ENCODE measurements at regions of chr1 and their contacts with region 1.

Region 1: DNA sequence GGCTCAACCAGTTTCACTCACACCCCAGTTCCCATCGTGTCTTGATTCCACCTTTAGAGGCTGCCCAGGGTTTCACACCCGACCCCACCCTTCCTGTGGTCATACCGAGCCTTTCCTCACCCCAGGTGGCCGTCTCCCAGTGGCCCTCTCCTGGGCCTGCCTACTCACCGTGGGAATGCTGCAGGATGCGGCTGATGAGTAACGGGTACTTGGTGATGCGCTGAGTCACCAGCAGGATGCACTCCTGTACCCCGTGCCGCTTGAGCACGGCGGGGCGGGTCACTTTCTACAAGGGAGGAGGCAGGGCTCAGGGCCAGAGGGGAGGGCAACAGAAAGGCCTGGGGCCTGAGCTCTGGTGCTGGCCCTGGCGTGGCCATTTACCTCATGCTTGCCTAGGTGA is 16.4 kb downstream of the ARHGEF2 start:
- DNase-seq: peak; percentile 96 to 98
- ATAC-seq: peak; percentile 97 to 99
- H3K4me3 ChIP-seq: peak overlapping the region; percentile 17; the same call in 1 of the 3 replicates
- H3K27ac ChIP-seq: peak overlapping the region; percentile 91 to 95
- H3K4me1 ChIP-seq: peaks cover 39% of the 10 kb centered on the region
- CTCF ChIP-seq: peak; percentile 43
- EP300 ChIP-seq: peak in 1 of 2 experiments; percentile 19; a peak in 1 of 5 replicates
- POLR2A ChIP-seq: no peak
- RAD21 ChIP-seq: peak; percentile 63 to 69; a peak in 4 of 5 replicates

Region 2: DNA sequence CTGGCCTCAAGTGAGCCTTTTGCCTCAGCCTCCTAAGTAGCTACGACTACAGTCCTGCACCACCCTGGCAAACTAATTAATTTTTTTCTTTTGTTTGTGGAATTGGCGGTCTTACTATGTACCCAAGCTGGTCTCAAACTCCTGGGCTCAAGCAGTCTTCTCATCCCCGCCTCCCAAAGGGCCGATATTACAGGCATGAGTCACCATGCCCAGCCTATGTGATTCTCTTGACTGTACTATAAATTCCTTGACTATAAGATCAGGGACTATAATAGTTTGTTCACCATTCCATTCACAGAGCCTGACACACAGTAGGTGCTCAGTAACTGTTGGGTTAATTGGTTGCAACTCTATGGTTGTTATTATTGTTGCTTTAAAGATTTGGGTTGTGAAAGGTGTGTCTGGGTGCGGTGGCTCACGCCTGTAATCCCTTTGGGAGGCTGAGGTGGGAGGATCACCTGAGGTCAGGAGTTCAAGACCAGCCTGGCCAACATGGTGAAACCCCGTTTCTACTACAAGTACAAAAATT is 255.8 kb before region 1 on chr1:
- CTCF ChIA-PET with region 1: no interaction called
- POLR2A ChIA-PET with region 1: no interaction called
- DNase-seq: peak in 1 of 2 experiments; percentile 36
- ATAC-seq: peak; percentile 50 to 68; a peak in 5 of 6 replicates
- H3K4me3 ChIP-seq: no peak overlapping the region
- H3K27ac ChIP-seq: no peak overlapping the region
- H3K4me1 ChIP-seq: no peaks in the 10 kb centered on the region
- CTCF ChIP-seq: no peak
- EP300 ChIP-seq: no peak
- POLR2A ChIP-seq: no peak
- RAD21 ChIP-seq: no peak

Region 3: GRCh38 chr1:155951753-155952504 is 10.0 kb before region 1 on chr1:
- CTCF ChIA-PET with region 1: interaction called, 16 read pairs
- POLR2A ChIA-PET with region 1: no interaction called
- DNase-seq: no peak
- ATAC-seq: no peak
- H3K4me3 ChIP-seq: no peak overlapping the region
- H3K27ac ChIP-seq: no peak overlapping the region
- H3K4me1 ChIP-seq: peaks cover 5% of the 10 kb centered on the region; the same call in 2 of the 3 replicates
- CTCF ChIP-seq: no peak
- EP300 ChIP-seq: no peak
- POLR2A ChIP-seq: no peak
- RAD21 ChIP-seq: no peak

Region 4: GRCh38 chr1:155978325-155978972 is 16.5 kb after region 1 on chr1 and contains the start of gene ARHGEF2:
- CTCF ChIA-PET with region 1: interaction called, 36 read pairs
- POLR2A ChIA-PET with region 1: interaction called, 9 read pairs
- DNase-seq: peak; percentile 80 to 89
- ATAC-seq: peak; percentile 64 to 85
- H3K4me3 ChIP-seq: peak within 1 kb of the TSS; percentile 90
- H3K27ac ChIP-seq: peak within 1 kb of the TSS; percentile 98 to 99
- H3K4me1 ChIP-seq: peaks cover 76% of the 10 kb centered on the region
- CTCF ChIP-seq: peak; percentile 23; the same call in 2 of the 3 replicates
- EP300 ChIP-seq: no peak
- POLR2A ChIP-seq: peak; percentile 69
- RAD21 ChIP-seq: no peak
- polyA plus RNA-seq, gene ARHGEF2: 67.4 and 69.1 TPM in 2 replicates

Measured in A549 (cell line).